ENCODE measurements at regions of chr16 and their contacts with region 1.

Region 1: GRCh38 chr16:29154676-29155121 is 169.8 kb downstream of the LAT start:
- DNase-seq: no peak
- ATAC-seq: no peak
- H3K4me3 ChIP-seq: no peak overlapping the region
- H3K27ac ChIP-seq: no peak overlapping the region
- H3K4me1 ChIP-seq: peaks cover 8 to 38% of the 10 kb centered on the region in 2 experiments; a peak in 4 of 5 replicates
- H3K27me3 ChIP-seq: peaks cover 0 to 18% of the 10 kb centered on the region in 2 experiments; a peak in 2 of 5 replicates
- CTCF ChIP-seq: no peak
- EP300 ChIP-seq: no peak
- POLR2A ChIP-seq: no peak
- RAD21 ChIP-seq: no peak

Region 2: GRCh38 chr16:28882551-28883160 is 272.0 kb before region 1 on chr16:
- CTCF ChIA-PET with region 1: no interaction called
- POLR2A ChIA-PET with region 1: no interaction called
- in situ Hi-C with region 1: no loop called
- intact Hi-C with region 1: no loop called
- DNase-seq: no peak
- ATAC-seq: no peak
- H3K4me3 ChIP-seq: no peak overlapping the region
- H3K27ac ChIP-seq: no peak overlapping the region
- H3K4me1 ChIP-seq: peaks cover 11 to 43% of the 10 kb centered on the region in 2 experiments; a peak in 4 of 5 replicates
- H3K27me3 ChIP-seq: no peaks in the 10 kb centered on the region
- CTCF ChIP-seq: no peak
- EP300 ChIP-seq: no peak
- POLR2A ChIP-seq: no peak
- RAD21 ChIP-seq: no peak

Region 3: DNA sequence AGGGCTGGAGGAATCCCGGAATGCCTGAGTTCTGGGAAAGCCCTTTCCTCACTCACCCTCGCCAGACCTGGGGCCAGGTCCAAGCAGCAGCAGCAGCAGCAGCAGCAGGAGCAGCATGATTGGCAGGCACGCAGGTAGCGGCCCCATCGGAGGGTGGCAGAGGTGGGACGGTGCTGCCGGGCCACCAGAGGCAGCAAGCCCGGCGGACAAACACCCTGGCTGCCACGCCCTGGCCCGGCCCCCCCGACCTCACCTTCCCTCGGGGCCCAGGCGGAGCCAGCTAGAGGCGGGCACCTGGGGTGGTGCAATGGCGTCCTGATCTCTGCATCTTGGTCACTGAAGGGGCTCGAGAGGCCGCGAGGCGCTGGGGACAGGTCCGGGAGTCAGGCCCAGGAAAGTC is 47.4 kb before region 1 on chr16:
- CTCF ChIA-PET with region 1: no interaction called
- POLR2A ChIA-PET with region 1: no interaction called
- in situ Hi-C with region 1: no loop called
- intact Hi-C with region 1: no loop called
- DNase-seq: peak in 2 of 4 experiments; percentile 35
- ATAC-seq: no peak
- H3K4me3 ChIP-seq: no peak overlapping the region
- H3K27ac ChIP-seq: no peak overlapping the region
- H3K4me1 ChIP-seq: peaks cover 0 to 7% of the 10 kb centered on the region in 2 experiments; a peak in 2 of 5 replicates
- H3K27me3 ChIP-seq: peaks cover 16 to 31% of the 10 kb centered on the region in 2 experiments
- CTCF ChIP-seq: no peak
- EP300 ChIP-seq: no peak
- POLR2A ChIP-seq: no peak
- RAD21 ChIP-seq: no peak

Region 4: DNA sequence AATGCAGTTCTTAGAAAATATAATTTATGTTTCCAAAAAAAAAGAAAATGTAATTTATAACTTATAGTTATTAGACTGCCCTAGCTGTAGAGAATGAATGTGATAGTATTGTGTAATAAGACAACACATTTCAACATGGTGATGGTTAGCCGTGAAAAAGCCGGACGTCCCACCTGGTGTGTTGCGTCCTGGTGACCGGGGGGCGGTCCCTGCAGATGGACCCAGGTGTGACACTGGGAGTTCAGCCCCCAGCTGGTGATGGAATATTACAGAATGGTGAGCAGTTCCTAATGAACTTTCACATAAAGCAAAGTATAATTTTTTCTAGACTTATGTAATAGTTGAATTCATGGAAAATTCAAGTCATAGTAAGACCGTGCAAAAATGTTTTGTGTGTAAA is 37.1 kb before region 1 on chr16:
- CTCF ChIA-PET with region 1: no interaction called
- POLR2A ChIA-PET with region 1: no interaction called
- in situ Hi-C with region 1: no loop called
- intact Hi-C with region 1: loop called (anchors 5 kb)
- DNase-seq: no peak
- ATAC-seq: no peak
- H3K4me3 ChIP-seq: no peak overlapping the region
- H3K27ac ChIP-seq: no peak overlapping the region
- H3K4me1 ChIP-seq: peaks cover 8 to 16% of the 10 kb centered on the region in 2 experiments; a peak in 4 of 5 replicates
- H3K27me3 ChIP-seq: peaks cover 0 to 6% of the 10 kb centered on the region in 2 experiments; a peak in 2 of 5 replicates
- CTCF ChIP-seq: no peak
- EP300 ChIP-seq: no peak
- POLR2A ChIP-seq: no peak
- RAD21 ChIP-seq: no peak

Region 5: DNA sequence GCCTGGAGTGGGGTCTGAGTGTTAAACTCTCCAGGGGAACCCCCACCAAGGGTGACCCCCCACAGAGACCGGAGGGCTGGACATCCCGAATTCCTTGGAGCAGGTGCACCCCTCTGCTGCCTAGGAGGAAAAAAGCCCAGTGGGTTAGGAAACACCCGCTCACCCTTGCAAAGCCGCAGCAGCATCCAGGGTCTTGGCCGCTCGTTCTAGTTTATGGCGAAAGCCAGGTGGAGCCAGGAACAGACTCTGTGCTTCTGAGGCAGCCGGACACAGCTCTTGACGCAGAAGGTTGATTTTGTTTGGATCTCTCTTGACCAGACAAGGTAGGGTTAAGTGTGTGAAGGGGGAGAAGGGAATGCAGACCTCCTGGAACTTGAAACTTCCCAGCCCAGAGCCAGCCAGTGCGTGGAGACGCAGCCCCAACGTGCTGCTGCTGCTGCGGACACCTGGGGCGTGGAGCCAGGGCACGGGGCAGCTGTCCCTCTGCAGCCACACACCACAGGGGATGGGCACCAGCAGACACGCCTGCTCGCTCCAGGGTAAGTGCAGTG is 15.4 kb before region 1 on chr16:
- CTCF ChIA-PET with region 1: no interaction called
- POLR2A ChIA-PET with region 1: no interaction called
- in situ Hi-C with region 1: no loop called
- intact Hi-C with region 1: no loop called
- DNase-seq: no peak
- ATAC-seq: no peak
- H3K4me3 ChIP-seq: no peak overlapping the region
- H3K27ac ChIP-seq: no peak overlapping the region
- H3K4me1 ChIP-seq: peaks cover 0 to 18% of the 10 kb centered on the region in 2 experiments; a peak in 2 of 5 replicates
- H3K27me3 ChIP-seq: peaks cover 0 to 12% of the 10 kb centered on the region in 2 experiments; a peak in 3 of 5 replicates
- CTCF ChIP-seq: no peak
- EP300 ChIP-seq: no peak
- POLR2A ChIP-seq: no peak
- RAD21 ChIP-seq: no peak